ENCODE measurements at regions of chr22 and their contacts with region 1.

Region 1: GRCh38 chr22:45831394-45831793 is 145.6 kb downstream of the WNT7B start:
- DNase-seq: peak; percentile 26
- H3K4me3 ChIP-seq: no peak overlapping the region
- H3K27ac ChIP-seq: no peak overlapping the region
- H3K4me1 ChIP-seq: peaks cover 11% of the 10 kb centered on the region
- H3K27me3 ChIP-seq: no peaks in the 10 kb centered on the region
- CTCF ChIP-seq: peak; percentile 30 to 31
- POLR2A ChIP-seq: no peak

Region 2: GRCh38 chr22:45577746-45578523 is 253.5 kb before region 1 on chr22:
- CTCF ChIA-PET with region 1: interaction called, 8 read pairs
- POLR2A ChIA-PET with region 1: no interaction called
- dilution Hi-C with region 1: no loop called
- intact Hi-C with region 1: loop called (anchors 1 kb)
- DNase-seq: peak; percentile 71
- H3K4me3 ChIP-seq: no peak overlapping the region
- H3K27ac ChIP-seq: no peak overlapping the region
- H3K4me1 ChIP-seq: no peaks in the 10 kb centered on the region
- H3K27me3 ChIP-seq: peaks cover 0 to 2% of the 10 kb centered on the region in 2 experiments
- CTCF ChIP-seq: peak; percentile 89 to 94
- POLR2A ChIP-seq: no peak

Region 3: DNA sequence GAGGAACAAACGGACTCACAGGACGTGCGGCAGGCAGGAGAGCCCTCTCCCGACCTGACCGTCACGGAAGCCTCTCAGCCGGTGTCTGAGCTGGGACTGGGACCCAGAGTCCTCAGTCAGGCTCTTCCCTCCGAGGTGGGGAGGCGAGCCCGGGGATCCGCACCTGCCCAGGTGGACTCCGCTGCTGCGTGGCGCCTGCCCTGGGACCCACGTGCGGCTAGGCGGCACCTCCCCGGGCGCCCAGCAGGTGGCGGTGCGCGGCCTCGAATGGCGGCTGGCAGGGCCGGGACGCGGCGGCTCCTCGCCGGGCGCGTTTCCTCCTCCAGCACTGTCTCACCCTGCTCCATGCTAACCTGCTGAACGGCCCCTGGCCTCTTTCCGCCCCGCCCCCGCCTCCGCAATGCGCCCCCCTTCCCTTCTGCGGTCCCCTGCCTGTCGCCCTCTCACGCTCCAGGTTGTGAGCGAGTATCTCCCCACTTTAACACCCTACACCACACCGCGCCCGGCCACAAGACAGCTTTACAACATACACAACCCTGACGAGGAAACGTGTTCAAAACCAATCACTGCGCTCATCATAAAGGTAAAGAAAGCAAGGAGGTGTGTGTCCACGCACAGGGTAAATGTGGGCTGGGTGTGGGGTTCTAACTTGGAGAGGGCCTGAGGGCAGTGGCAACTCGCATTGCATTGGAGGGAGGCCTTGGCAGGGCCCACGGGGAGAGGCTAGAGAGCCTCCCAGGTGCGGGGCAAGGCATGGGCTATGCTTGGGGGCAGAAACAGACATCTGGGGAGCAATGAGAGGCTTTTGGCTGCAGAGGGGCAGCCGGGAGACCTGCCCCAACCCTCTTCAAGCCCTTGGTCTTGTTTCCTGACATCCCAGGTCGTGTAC is 185.6 kb before region 1 on chr22:
- CTCF ChIA-PET with region 1: interaction called, 20 read pairs
- POLR2A ChIA-PET with region 1: no interaction called
- dilution Hi-C with region 1: no loop called
- intact Hi-C with region 1: loop called (anchors 1 kb)
- DNase-seq: peak; percentile 34
- H3K4me3 ChIP-seq: no peak overlapping the region
- H3K27ac ChIP-seq: no peak overlapping the region
- H3K4me1 ChIP-seq: no peaks in the 10 kb centered on the region
- H3K27me3 ChIP-seq: peaks cover 18 to 21% of the 10 kb centered on the region in 2 experiments
- CTCF ChIP-seq: peak; percentile 84 to 91
- POLR2A ChIP-seq: no peak

Region 4: GRCh38 chr22:45731798-45732495 is 99.4 kb before region 1 on chr22:
- CTCF ChIA-PET with region 1: interaction called, 18 read pairs
- POLR2A ChIA-PET with region 1: no interaction called
- dilution Hi-C with region 1: no loop called
- intact Hi-C with region 1: loop called (anchors 2 kb)
- DNase-seq: no peak
- H3K4me3 ChIP-seq: no peak overlapping the region
- H3K27ac ChIP-seq: no peak overlapping the region
- H3K4me1 ChIP-seq: no peaks in the 10 kb centered on the region
- H3K27me3 ChIP-seq: no peaks in the 10 kb centered on the region
- CTCF ChIP-seq: peak in 1 of 2 donors; percentile 22
- POLR2A ChIP-seq: no peak

Region 5: DNA sequence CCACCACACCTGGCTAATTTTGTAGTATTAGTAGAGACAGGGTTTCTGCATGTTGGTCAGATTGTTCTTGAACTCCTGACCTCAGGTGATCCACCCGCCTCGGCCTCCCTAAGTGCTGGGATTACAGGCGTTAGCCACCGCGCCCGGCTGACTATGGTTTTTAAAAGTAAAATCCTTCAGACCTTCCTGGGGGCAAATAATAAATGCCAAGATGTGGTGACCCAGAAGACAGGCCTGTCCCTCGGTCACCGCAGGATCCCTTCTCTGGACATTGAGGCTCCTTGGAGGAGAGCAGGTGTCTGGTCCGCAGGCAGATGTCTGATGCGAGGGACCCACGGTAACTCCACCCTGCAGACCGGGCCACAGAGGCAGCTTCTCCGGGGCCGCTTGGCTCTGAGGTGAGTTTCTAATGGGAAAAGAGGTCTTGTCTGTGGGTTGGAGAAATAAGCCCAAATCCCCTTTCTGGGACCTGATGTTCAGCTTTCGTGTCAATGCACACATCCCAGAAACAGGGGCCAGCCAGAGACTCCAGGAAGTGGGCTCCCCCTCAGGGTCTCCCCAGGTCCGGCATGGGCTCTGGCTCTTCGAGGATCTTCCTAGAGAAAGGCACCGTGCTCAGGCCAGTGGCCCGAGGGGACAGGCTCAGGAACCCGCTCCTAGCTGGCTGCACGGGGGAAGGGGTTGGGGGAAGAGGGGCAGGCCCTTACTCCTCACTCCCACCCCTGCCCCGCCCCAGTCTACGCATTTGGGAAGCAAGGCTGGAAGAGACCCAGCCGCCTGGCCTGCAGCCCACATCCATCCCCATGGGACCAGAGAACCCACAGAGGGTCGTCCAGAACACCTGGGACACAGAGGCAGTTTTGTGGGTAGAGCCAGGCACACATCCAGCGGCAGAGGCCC is 45.0 kb after region 1 on chr22:
- CTCF ChIA-PET with region 1: no interaction called
- POLR2A ChIA-PET with region 1: no interaction called
- dilution Hi-C with region 1: no loop called
- intact Hi-C with region 1: no loop called
- DNase-seq: no peak
- H3K4me3 ChIP-seq: no peak overlapping the region
- H3K27ac ChIP-seq: no peak overlapping the region
- H3K4me1 ChIP-seq: no peaks in the 10 kb centered on the region
- H3K27me3 ChIP-seq: peaks cover 43 to 59% of the 10 kb centered on the region in 2 experiments
- CTCF ChIP-seq: no peak
- POLR2A ChIP-seq: no peak

Measured in endothelial cell of umbilical vein (primary cell).